Mucosa of descending colon (tissue), 3 donors: ENCODE measurements at regions of chr3 and their contacts with region 1.

Region 1: DNA sequence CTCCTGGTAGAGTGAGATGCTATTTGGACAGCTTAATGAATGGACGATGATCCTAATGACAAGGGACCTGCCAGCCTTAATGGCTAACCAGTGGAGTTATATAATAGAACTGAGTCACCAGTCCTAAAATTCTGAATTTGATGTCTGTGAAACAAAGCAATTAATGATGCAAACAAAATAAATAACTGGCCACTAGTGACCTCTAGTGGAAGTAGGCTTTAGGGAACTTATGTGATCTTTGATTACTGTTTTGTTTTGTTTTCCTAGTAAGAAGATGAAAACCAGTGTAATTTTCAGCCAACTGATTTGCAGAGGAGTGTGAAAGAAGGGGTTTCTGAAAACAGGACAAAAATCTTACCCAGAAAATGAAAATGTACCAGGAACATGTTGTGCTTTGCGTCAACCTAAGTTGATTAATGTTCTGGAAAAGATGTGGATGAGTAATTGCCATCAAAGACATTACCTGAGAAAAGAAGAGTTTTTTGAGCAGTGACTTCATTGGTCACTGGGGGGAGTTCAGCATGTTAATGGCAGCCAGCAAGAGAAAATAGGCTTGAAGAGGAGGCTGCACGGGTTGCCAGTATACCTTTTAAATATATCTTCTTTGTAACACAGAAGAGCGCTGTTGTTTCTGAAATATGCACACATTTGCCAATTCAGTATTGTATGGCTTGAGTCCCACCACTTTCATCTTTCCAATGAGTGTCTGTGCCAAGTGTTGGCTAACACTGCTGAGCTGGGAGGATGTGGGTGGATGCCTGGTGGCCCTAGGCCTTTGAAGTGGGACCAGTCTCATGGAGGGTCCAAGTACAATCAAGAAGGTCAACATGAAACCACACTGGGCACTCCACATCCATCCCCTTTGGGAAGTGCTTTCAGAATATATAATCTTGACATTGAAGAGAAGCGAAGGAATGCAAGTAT is 9.3 kb downstream of the VEPH1 start:
- DNase-seq: no peak
- ATAC-seq: no peak
- H3K4me3 ChIP-seq: no peak overlapping the region
- H3K4me1 ChIP-seq: no peaks in the 10 kb centered on the region
- CTCF ChIP-seq: no peak

Region 2: GRCh38 chr3:157201648-157202278 is 292.1 kb before region 1 on chr3:
- intact Hi-C with region 1: loop called in 1 of 2 experiments (anchors 10 kb)
- DNase-seq: no peak
- ATAC-seq: peak; percentile 53
- H3K4me3 ChIP-seq: no peak overlapping the region
- H3K4me1 ChIP-seq: no peaks in the 10 kb centered on the region
- CTCF ChIP-seq: no peak

Region 3: DNA sequence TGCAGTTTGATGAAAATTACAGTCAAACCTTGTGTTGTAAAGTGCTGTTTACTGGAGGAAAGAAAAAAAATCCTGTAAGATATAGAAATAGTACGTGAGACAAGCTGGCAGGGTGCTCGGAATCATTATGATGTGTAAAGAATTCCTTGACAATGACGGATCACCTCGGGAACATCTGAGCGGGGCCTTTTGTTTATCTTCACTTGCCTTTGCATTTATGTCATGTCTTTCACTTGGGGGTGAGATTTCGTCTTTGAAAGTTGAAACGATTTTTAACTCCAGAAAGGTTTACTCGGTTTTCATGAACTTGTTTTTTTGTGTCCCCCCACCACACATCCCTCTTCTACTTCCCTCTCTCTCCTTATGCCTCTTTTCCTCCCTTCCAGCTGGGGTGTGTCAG is 137.6 kb after region 1 on chr3:
- intact Hi-C with region 1: no loop called
- DNase-seq: no peak
- ATAC-seq: no peak
- H3K4me3 ChIP-seq: no peak overlapping the region
- H3K4me1 ChIP-seq: no peaks in the 10 kb centered on the region
- CTCF ChIP-seq: no peak

Region 4: DNA sequence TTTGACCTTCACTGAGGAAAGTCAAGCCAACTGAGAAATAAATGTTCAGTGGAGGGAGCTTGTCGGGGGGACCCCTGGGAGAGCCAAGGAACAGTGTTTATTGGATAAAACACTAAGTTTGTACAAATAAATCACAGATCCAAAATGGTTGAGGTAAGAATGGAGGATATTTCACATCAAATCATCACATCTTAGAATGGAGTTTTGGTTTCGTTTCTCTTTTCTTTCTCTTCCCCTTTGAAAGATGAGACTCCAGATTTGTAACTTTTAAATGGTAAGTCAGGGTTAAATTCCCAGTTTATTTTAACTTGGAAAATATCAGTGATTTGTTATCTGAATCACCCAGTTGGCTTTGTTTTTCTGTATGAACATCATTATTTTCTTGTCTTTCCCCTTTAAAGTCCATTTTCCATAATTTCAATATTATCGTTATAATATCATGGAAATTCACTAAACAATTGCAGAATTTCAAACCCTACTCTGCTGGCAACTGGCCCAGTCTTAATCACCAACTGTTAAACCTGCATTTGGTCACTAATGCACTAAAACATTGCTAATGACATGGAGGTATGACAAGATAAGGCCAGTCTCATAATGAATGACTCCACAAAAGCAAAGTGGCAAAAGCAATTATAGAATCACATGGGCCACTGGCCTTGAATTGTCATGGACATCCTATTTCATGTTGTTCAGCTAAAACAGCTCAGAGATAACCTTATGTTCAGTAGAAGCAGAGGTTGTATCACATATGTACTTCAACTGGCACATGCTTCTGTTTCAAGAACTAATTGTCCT is 317.2 kb after region 1 on chr3:
- intact Hi-C with region 1: no loop called
- DNase-seq: no peak
- ATAC-seq: no peak
- H3K4me3 ChIP-seq: no peak overlapping the region
- H3K4me1 ChIP-seq: no peaks in the 10 kb centered on the region
- CTCF ChIP-seq: no peak